Panc1 (cell line): ENCODE measurements at regions of chr15 and their contacts with region 1.

Region 1: GRCh38 chr15:75606711-75607699 is 18.5 kb downstream of the SNUPN start:
- DNase-seq: no peak
- ATAC-seq: no peak
- H3K4me3 ChIP-seq: no peak overlapping the region
- H3K27ac ChIP-seq: no peak overlapping the region
- H3K4me1 ChIP-seq: no peaks in the 10 kb centered on the region
- H3K27me3 ChIP-seq: no peaks in the 10 kb centered on the region
- CTCF ChIP-seq: no peak

Region 2: DNA sequence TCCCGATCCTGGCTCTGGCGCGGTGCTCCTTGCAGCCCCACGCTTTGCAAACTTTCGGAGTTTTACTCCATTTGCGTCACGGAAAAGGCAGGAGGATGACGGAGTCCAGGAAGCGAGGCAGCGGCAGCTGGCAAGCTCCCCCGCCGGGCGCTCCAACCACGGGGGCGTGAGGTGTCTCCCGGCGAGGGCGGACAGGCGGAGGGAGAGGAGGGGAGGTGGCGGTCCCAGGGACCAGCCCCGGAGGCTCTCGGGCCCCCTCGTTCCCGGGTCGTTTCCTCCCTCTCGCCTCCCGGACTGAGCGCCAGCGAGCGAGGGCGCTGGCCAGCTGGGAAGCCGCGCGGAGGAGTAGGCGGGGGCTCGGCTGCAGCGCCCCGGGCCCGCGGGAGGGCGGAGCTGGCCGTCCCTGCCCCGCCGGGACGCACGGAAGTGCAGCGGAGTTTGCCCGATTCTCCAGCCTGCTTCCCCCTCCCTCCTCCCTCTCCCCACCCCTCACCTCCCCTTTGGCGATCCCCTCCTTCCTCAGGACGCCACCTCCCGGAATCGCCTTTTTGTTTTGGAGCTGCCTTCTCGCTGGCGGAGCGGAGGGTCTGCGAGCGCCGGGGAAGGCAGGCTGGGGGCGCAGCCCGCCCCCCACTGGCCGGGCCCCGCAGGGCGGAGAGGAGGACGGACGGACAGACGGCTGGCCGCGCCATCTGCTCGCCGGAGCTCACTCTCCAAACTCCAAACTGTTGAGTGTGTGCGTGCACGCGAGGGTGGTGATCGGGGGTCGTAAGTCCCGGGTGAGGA is 40.6 kb after region 1 on chr15 and contains the start of gene SNX33:
- CTCF ChIA-PET with region 1: no interaction called
- POLR2A ChIA-PET with region 1: no interaction called
- in situ Hi-C with region 1: no loop called
- intact Hi-C with region 1: no loop called
- DNase-seq: no peak
- ATAC-seq: peak; percentile 87
- H3K4me3 ChIP-seq: peak within 1 kb of the TSS; percentile 76 to 80
- H3K27ac ChIP-seq: peak within 1 kb of the TSS; percentile 81
- H3K4me1 ChIP-seq: peaks cover 31% of the 10 kb centered on the region
- H3K27me3 ChIP-seq: no peaks in the 10 kb centered on the region
- CTCF ChIP-seq: no peak; the same call in 1 of the 2 replicates
- total RNA-seq, gene SNX33: 17.0 TPM

Region 3: DNA sequence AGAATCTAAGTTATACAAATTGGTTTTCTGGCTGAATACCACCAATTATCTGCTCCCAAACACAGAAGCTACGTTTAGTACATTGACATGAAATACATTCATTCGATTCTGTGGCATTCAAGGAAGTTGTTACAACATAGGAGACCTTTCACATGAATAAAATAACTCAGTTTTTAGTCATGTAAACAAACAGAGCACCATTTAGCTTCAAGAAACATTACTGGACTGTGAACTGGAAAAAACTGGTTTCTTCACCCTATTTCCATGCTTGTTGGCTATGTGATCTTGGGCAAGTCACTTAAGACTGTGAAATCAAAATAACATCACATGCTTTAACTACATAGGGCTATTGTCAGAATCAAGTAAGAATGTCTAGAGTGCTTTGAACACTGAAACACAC is 359.1 kb after region 1 on chr15:
- CTCF ChIA-PET with region 1: no interaction called
- POLR2A ChIA-PET with region 1: interaction called, 16 read pairs
- in situ Hi-C with region 1: no loop called
- intact Hi-C with region 1: no loop called
- DNase-seq: no peak
- ATAC-seq: no peak
- H3K4me3 ChIP-seq: no peak overlapping the region
- H3K27ac ChIP-seq: no peak overlapping the region
- H3K4me1 ChIP-seq: peaks cover 7% of the 10 kb centered on the region; the same call in 1 of the 2 replicates
- H3K27me3 ChIP-seq: no peaks in the 10 kb centered on the region; the same call in 1 of the 2 replicates
- CTCF ChIP-seq: no peak

Region 4: DNA sequence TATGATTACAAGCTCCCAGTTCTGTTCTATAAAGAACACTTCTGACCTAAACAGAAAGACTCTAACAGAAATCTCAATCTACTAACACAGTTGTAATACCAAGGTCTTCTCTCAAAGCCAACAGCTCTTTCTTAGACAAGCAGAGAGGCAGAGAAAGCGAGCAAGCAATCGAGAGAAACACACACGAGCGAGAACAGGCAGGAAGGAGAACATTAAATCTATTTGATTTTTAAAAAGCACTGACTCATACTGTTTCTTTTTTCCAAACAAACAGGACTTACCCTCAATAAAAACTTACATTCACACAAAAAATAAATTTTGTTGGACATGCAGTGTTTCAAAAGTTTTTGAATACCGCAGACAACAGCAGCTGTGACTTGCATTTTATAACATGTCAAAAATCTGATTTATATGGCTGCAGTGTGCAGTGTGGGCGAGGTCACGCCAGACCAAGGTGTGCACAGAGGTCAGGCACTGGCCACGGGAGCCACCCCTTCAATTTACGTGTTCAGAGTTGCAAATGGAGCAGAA is 405.1 kb after region 1 on chr15 and contains the start of gene NRG4:
- CTCF ChIA-PET with region 1: no interaction called
- POLR2A ChIA-PET with region 1: no interaction called
- in situ Hi-C with region 1: no loop called
- intact Hi-C with region 1: no loop called
- DNase-seq: no peak
- ATAC-seq: peak; percentile 91
- H3K4me3 ChIP-seq: peak within 1 kb of the TSS; percentile 28 to 35
- H3K27ac ChIP-seq: peak within 1 kb of the TSS; percentile 14
- H3K4me1 ChIP-seq: peaks cover 10% of the 10 kb centered on the region
- H3K27me3 ChIP-seq: 0 out of 2 replicates have a peak, but pooled peaks cover 3% of the 10 kb centered on the region
- CTCF ChIP-seq: no peak
- total RNA-seq, gene NRG4: 0.39 TPM